Aorta (tissue), 5 donors: ENCODE measurements at regions of chr9 and their contacts with region 1.

Region 1: DNA sequence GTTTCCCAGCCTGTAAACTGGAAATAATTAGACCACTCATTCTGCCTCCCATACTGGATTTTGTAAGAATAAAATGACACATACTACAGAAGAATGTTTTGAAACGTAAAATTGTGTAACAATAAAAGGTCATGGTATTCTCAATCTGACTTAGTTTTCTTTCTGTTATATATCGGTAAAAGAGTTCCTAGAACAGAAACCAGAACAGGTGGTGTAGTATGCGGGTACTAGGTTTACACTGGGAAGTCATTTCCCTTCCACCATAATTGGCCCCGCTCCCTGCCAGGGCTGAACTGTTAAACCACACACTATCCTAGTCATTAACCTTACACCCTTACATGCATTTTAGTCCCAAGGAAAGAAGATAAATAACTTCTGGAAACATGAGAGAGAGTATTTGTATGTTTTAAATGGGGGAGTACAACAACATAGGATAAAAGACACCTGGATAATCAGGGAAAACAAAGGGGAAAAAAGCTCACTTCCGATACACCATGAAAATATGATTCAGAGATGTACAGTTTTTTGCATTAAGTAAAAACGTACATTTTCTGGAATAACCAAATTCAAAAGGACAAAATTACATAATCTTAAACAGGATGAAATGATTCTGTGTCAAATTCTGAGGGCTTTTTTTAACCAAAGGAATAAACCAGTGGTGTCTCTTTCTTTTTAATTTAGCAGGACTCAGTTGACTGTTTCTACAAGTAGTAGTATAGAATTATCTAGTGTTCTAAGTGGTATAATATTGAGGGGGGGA is 199.7 kb downstream of the GLIS3 start:
- DNase-seq: no peak
- ATAC-seq: no peak
- H3K4me3 ChIP-seq: no peak overlapping the region
- H3K27ac ChIP-seq: no peak overlapping the region
- H3K4me1 ChIP-seq: peaks cover 4 to 14% of the 10 kb centered on the region in 2 donors
- H3K27me3 ChIP-seq: no peaks in the 10 kb centered on the region

Region 2: DNA sequence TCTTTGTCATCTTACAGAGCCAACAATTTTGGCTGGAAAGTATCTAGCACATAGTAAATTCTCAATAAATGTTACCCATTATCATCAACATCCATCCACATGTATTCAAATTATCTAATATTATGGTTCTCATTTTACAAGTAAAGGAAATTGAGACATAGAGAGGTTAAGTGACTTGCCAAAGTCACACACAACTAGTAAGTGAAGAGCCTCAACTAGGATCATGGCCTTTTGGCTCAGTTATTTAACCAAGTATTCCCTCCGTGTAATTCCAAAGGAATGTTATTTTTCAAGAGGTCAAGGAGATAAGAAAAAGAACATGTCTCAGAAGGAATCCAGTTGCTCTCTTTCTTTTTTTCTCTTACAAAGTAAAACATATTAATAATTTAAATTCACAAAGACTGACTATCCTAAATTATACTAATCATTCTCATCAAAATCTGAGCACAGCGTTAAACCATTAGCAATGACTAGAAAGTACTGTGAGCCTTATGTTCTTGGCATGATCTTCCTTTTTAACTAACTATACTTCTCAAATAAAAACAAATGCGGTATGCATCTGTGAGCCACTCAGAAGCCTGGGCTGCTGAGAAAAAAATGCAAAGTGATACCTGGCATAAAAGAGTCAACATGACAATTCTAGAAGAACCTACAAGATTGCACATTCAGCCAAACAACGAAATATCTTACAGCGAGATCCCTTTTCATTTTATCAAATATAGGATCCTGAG is 151.2 kb before region 1 on chr9:
- intact Hi-C with region 1: loop called in 1 of 2 experiments (anchors 10 kb)
- DNase-seq: no peak
- ATAC-seq: peak; percentile 61
- H3K4me3 ChIP-seq: no peak overlapping the region
- H3K27ac ChIP-seq: no peak overlapping the region
- H3K4me1 ChIP-seq: peaks cover 0 to 12% of the 10 kb centered on the region in 2 donors
- H3K27me3 ChIP-seq: no peaks in the 10 kb centered on the region

Region 3: DNA sequence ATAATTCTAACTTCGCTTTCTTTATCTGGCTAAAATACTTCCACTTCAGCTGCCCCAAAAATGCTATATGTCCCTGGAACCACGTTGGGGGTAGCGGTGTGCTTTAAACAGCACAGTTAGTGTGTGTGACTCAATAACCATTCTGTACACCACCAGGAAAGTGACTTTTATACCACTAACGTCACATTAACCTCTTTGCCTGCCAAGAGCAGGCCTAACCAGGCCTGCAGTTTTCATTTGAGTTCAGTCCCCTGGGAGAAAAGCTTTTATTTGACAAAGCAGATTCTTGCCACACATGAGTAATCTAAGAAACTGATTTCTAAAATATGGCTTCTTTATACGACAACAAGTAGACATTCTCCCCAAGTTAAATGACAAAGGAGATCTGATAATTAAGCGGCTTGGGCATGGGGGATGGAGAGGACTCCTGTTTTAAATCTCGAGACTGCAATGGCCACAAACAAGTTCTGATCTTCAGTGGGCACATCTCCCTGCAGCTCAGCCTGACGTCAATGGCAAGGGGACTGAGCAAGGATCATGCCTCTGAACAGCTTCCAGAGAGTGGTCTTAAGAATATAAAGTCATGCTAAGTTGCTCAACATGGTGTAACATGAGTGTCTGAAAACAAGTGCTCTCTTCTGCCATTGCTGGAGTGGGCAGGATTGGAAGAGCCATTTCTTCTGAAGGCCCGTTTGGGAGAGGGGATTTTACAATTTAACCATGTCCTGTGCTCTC is 107.9 kb after region 1 on chr9:
- intact Hi-C with region 1: loop called in 1 of 2 experiments (anchors 10 kb)
- DNase-seq: peak in 1 of 2 donors; percentile 50
- ATAC-seq: peak; percentile 89
- H3K4me3 ChIP-seq: no peak overlapping the region
- H3K27ac ChIP-seq: peak overlapping the region in 1 of 2 donors; percentile 29
- H3K4me1 ChIP-seq: peaks cover 0 to 1% of the 10 kb centered on the region in 2 donors
- H3K27me3 ChIP-seq: no peaks in the 10 kb centered on the region